ENCODE measurements at regions of chr4 and their contacts with region 1.

Region 1: GRCh38 chr4:159735281-159736207 is 632.7 kb downstream of the RAPGEF2 start:
- DNase-seq: no peak
- H3K4me3 Mint-ChIP-seq: no peak overlapping the region
- H3K27ac Mint-ChIP-seq: no peak overlapping the region
- H3K4me1 Mint-ChIP-seq: no peaks in the 10 kb centered on the region
- H3K27me3 Mint-ChIP-seq: no peaks in the 10 kb centered on the region

Region 2: GRCh38 chr4:159446266-159446976 is 289.1 kb before region 1 on chr4:
- CTCF ChIA-PET with region 1: no interaction called
- intact Hi-C with region 1: no loop called
- DNase-seq: peak; percentile 42
- H3K4me3 Mint-ChIP-seq: no peak overlapping the region
- H3K27ac Mint-ChIP-seq: no peak overlapping the region
- H3K4me1 Mint-ChIP-seq: no peaks in the 10 kb centered on the region
- H3K27me3 Mint-ChIP-seq: peaks cover 17% of the 10 kb centered on the region

Region 3: DNA sequence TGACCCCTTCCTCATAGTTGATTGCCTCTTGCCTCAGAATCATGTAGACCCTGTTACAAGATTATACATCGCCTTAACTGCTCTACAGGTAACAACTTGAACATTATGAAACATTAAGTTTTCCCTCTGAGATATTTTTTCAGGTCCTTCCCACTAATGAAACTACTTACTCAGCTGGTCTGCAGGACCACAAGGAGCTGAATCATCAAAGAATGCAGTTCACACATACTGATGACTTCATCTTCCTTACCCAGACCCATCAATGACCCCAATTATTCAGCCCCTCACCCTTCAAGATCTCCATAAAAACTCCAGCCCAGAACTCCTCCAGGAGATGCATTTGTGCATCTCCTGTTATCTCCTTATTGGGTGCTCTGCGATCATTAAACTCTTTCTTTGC is 88.2 kb after region 1 on chr4:
- CTCF ChIA-PET with region 1: no interaction called
- intact Hi-C with region 1: no loop called
- DNase-seq: no peak
- H3K4me3 Mint-ChIP-seq: no peak overlapping the region
- H3K27ac Mint-ChIP-seq: no peak overlapping the region
- H3K4me1 Mint-ChIP-seq: no peaks in the 10 kb centered on the region
- H3K27me3 Mint-ChIP-seq: no peaks in the 10 kb centered on the region

Region 4: DNA sequence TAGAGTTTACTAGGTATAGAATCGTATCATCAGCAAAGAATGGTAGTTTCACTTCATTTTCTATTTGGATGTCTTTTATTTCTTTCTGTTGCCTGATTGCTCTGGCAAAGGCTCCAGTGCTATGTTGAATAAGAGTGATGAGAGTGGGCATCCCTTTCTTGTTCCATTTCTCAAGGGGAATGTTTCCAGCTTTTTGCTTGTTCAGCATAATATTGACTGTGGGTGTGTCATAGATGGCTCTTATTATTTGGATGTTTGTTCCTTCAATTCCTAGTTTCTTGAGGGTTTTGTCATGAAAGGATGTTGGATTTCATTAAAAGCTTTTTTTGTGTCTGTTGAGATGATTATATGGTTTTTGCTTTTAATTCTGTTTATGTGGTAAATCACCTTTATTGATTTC is 481.8 kb after region 1 on chr4:
- CTCF ChIA-PET with region 1: no interaction called
- intact Hi-C with region 1: loop called (anchors 5 kb)
- DNase-seq: no peak
- H3K4me3 Mint-ChIP-seq: no peak overlapping the region
- H3K27ac Mint-ChIP-seq: no peak overlapping the region
- H3K4me1 Mint-ChIP-seq: no peaks in the 10 kb centered on the region
- H3K27me3 Mint-ChIP-seq: no peaks in the 10 kb centered on the region